ENCODE measurements at regions of chr12 and their contacts with region 1.

Region 1: DNA sequence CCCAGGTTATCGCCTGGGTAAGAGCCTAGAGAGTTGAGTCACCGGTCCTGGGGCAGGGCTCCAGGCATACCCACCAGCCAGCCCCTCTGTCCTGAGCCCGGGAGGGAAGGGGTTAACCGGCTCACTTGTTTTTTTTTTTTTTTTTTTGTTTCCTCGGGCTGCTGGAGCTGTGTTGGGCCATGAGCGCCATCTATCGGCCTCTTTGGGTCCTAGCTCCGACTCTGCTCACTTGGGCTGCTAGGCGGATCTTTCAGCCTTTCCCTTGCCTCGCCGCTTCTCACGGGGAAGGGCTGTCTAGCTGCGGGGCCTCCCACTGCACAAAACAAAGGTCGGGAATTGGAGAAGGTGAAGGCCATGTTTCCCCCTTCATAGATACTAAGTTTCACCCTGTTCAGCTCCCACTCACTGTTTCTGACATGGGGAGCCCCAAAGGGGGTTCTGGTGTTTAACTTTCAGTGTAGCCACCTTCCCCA is 2.8 kb upstream of the SMUG1 start:
- DNase-seq: peak; percentile 73
- ATAC-seq: peak; percentile 84
- H3K4me3 ChIP-seq: 0 out of 4 replicates have a peak overlapping the region, but pooled peaks of 1 of the 2 experiments have one; percentile 4
- H3K27ac ChIP-seq: peak overlapping the region; percentile 72
- H3K4me1 ChIP-seq: peaks cover 16% of the 10 kb centered on the region
- H3K27me3 ChIP-seq: no peaks in the 10 kb centered on the region
- CTCF ChIP-seq: peak; percentile 94

Region 2: DNA sequence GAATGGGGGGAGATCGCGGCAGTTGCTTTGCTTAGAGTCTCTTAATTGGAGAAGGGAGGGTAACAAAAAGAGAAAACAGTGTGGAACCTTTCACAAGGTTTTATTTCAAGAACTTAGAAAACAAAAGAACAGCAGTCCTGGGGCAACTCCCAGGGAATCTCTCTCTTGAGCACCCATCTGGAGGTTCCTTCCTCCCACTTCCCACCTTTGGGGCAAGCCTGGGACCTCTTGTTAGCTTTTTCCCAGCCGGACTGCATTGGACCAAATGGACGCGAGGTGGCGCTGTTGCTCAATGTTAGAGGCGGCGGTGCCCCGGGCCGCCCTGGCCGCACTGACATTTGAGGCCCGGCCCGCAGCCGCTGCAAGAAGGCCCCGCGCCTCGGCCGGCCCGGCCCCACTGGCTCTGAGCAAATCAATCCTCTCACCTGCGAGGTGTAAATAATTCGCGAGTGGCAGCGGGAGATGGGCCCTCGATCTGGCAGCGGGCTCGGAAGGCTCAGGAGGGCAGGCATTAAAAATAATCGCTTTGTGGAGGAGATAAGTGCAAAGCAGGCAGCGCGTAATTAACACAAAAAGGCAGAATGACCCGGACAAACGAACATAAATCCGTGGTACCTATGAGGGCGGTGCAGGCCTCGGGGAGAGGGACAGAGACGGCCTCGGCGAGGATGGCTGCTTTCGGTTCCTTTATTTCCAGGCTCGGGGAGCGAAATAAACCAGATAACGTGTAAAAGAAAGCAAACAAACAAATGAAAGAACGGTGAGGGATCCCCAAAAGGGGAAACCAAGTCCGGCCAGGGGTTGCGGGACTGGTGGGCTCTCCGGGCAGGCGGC is 185.5 kb before region 1 on chr12:
- CTCF ChIA-PET with region 1: interaction called, 4 read pairs
- POLR2A ChIA-PET with region 1: interaction called, 19 read pairs
- in situ Hi-C with region 1: no loop called
- intact Hi-C with region 1: loop called (anchors 1 kb)
- DNase-seq: no peak
- ATAC-seq: peak; percentile 56
- H3K4me3 ChIP-seq: peak overlapping the region; percentile 47 to 66
- H3K27ac ChIP-seq: peak overlapping the region; percentile 99
- H3K4me1 ChIP-seq: peaks cover 44% of the 10 kb centered on the region
- H3K27me3 ChIP-seq: no peaks in the 10 kb centered on the region
- CTCF ChIP-seq: peak; percentile 91

Region 3: GRCh38 chr12:54032627-54033100 is 158.9 kb before region 1 on chr12 and contains the start of gene HOXC5:
- CTCF ChIA-PET with region 1: interaction called, 17 read pairs
- POLR2A ChIA-PET with region 1: no interaction called
- in situ Hi-C with region 1: no loop called
- intact Hi-C with region 1: no loop called
- DNase-seq: peak; percentile 67
- ATAC-seq: peak; percentile 36; the same call in 1 of the 2 replicates
- H3K4me3 ChIP-seq: peak within 1 kb of the TSS in 1 of 2 experiments; percentile 12; a peak in 1 of 4 replicates
- H3K27ac ChIP-seq: peak within 1 kb of the TSS; percentile 78
- H3K4me1 ChIP-seq: peaks cover 95% of the 10 kb centered on the region
- H3K27me3 ChIP-seq: no peaks in the 10 kb centered on the region
- CTCF ChIP-seq: peak; percentile 98
- total RNA-seq, gene HOXC5: 5.0 TPM

Region 4: DNA sequence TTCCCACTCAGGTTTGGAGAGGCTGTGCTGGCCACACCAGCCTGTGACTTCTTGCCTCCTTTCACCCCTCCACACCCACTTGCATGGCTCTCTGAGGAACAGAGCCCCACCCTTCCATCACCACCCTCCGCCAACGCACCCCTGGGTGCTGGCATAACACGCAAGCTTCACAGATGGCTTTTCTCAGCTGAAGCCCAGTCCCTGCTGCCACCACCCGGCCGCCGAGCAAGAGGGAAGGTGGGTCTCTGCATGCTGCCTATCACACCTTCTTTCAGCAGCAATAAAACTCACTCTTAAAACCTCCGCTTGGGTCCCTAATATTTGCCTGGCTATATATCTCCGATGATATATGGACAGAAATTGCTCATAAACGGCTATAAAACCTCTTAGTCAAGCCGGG is 44.4 kb before region 1 on chr12:
- CTCF ChIA-PET with region 1: no interaction called
- POLR2A ChIA-PET with region 1: interaction called, 8 read pairs
- in situ Hi-C with region 1: loop called (anchors 5 kb)
- intact Hi-C with region 1: no loop called
- DNase-seq: no peak
- ATAC-seq: peak; percentile 42; the same call in 1 of the 2 replicates
- H3K4me3 ChIP-seq: no peak overlapping the region
- H3K27ac ChIP-seq: no peak overlapping the region
- H3K4me1 ChIP-seq: no peaks in the 10 kb centered on the region
- H3K27me3 ChIP-seq: no peaks in the 10 kb centered on the region
- CTCF ChIP-seq: no peak

Region 5: DNA sequence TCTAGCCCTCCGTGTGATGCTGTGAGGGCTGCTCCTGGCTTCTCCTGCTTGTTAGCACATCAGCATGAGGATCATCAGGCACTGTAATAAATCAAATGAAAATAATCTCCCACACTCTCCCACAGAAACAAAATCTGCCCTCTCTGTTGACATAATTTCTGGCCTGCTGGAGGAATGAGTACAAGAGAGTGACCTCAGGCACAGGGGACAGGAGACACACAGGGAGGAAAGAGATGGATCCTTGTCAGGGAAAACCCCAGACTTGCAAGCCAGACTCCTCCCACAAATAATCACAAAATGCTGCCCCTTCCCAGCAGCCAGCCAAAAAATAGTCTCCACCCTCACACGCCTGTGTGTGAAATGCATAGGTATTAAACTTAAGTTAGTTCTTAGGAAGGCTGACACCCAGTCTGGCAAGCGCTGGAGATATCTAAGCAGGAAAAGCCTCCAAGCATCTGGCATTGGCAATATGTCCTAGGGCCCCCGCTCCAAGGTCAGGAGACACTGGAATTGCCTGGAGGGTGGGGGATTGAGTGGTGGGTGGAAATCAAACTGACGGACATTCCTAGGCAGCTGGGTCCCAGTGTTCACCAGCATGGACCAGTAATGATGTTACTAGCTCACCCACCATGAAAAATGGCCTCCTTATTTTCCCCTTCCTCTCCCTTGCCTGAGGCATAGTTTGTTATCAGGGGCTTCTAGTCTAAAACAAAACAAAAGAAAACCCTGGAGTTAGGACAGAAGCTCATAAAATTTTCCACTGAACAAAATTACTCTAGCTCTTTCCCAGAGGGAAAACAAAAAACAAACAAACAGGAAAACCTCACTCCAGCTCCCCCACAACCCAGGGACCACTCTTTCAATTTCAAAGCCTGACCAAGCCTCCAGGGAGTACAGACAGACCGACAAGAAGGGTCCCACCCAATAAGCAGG is 24.8 kb before region 1 on chr12:
- CTCF ChIA-PET with region 1: interaction called, 10 read pairs
- POLR2A ChIA-PET with region 1: no interaction called
- in situ Hi-C with region 1: no loop called
- intact Hi-C with region 1: no loop called
- DNase-seq: no peak
- ATAC-seq: no peak
- H3K4me3 ChIP-seq: no peak overlapping the region
- H3K27ac ChIP-seq: no peak overlapping the region
- H3K4me1 ChIP-seq: peaks cover 8% of the 10 kb centered on the region
- H3K27me3 ChIP-seq: no peaks in the 10 kb centered on the region
- CTCF ChIP-seq: no peak

Region 6: GRCh38 chr12:54368709-54369583 is 177.4 kb after region 1 on chr12:
- CTCF ChIA-PET with region 1: no interaction called
- POLR2A ChIA-PET with region 1: no interaction called
- in situ Hi-C with region 1: no loop called
- intact Hi-C with region 1: no loop called
- DNase-seq: peak; percentile 79
- ATAC-seq: peak; percentile 79
- H3K4me3 ChIP-seq: peak overlapping the region; percentile 42 to 75
- H3K27ac ChIP-seq: peak overlapping the region; percentile 72
- H3K4me1 ChIP-seq: no peaks in the 10 kb centered on the region; the same call in 1 of the 2 replicates
- H3K27me3 ChIP-seq: no peaks in the 10 kb centered on the region
- CTCF ChIP-seq: peak; percentile 93

Region 7: DNA sequence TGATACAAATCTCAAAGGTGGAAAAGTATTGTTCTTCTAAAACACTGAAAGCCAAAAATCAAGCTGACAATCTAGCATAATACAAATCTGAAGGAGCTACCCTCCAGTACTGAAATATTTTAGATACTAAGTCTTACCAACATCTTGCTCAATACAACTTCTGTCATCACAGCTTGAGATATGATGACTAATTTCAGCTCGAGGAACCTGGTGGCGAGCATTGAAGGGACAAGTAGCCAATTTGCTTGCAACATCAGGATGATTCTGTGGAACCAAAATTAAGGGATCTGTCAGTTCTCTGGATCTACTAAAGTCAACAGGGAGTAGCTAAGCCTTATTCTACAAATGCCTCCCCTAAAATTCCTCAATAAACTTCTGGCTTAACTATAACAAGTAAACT is 271.4 kb after region 1 on chr12:
- CTCF ChIA-PET with region 1: no interaction called
- POLR2A ChIA-PET with region 1: no interaction called
- in situ Hi-C with region 1: no loop called
- intact Hi-C with region 1: no loop called
- DNase-seq: no peak
- ATAC-seq: no peak
- H3K4me3 ChIP-seq: no peak overlapping the region
- H3K27ac ChIP-seq: no peak overlapping the region
- H3K4me1 ChIP-seq: no peaks in the 10 kb centered on the region
- H3K27me3 ChIP-seq: peaks cover 41% of the 10 kb centered on the region
- CTCF ChIP-seq: no peak